ENCODE measurements at regions of chr5 and their contacts with region 1.

Region 1: GRCh38 chr5:73170522-73170921 is 2.5 kb upstream of the TMEM174 start:
- DNase-seq: peak; percentile 62
- H3K4me3 ChIP-seq: no peak overlapping the region
- H3K27ac ChIP-seq: no peak overlapping the region
- H3K4me1 ChIP-seq: no peaks in the 10 kb centered on the region
- H3K27me3 ChIP-seq: peaks cover 21 to 41% of the 10 kb centered on the region in 2 experiments
- CTCF ChIP-seq: peak; percentile 75 to 79
- POLR2A ChIP-seq: no peak

Region 2: GRCh38 chr5:73007051-73007450 is 163.5 kb before region 1 on chr5:
- CTCF ChIA-PET with region 1: no interaction called
- POLR2A ChIA-PET with region 1: no interaction called
- dilution Hi-C with region 1: no loop called
- intact Hi-C with region 1: no loop called
- DNase-seq: no peak
- H3K4me3 ChIP-seq: no peak overlapping the region
- H3K27ac ChIP-seq: no peak overlapping the region
- H3K4me1 ChIP-seq: no peaks in the 10 kb centered on the region
- H3K27me3 ChIP-seq: no peaks in the 10 kb centered on the region
- CTCF ChIP-seq: no peak
- POLR2A ChIP-seq: no peak

Region 3: GRCh38 chr5:73039086-73039485 is 131.4 kb before region 1 on chr5:
- CTCF ChIA-PET with region 1: no interaction called
- POLR2A ChIA-PET with region 1: no interaction called
- dilution Hi-C with region 1: no loop called
- intact Hi-C with region 1: no loop called
- DNase-seq: no peak
- H3K4me3 ChIP-seq: no peak overlapping the region
- H3K27ac ChIP-seq: no peak overlapping the region
- H3K4me1 ChIP-seq: no peaks in the 10 kb centered on the region
- H3K27me3 ChIP-seq: no peaks in the 10 kb centered on the region
- CTCF ChIP-seq: no peak
- POLR2A ChIP-seq: no peak

Region 4: GRCh38 chr5:73081093-73081492 is 89.4 kb before region 1 on chr5:
- CTCF ChIA-PET with region 1: interaction called, 57 read pairs
- POLR2A ChIA-PET with region 1: no interaction called
- dilution Hi-C with region 1: no loop called
- intact Hi-C with region 1: loop called (anchors 1 kb)
- DNase-seq: no peak
- H3K4me3 ChIP-seq: no peak overlapping the region
- H3K27ac ChIP-seq: no peak overlapping the region
- H3K4me1 ChIP-seq: no peaks in the 10 kb centered on the region
- H3K27me3 ChIP-seq: no peaks in the 10 kb centered on the region
- CTCF ChIP-seq: no peak
- POLR2A ChIP-seq: no peak

Region 5: DNA sequence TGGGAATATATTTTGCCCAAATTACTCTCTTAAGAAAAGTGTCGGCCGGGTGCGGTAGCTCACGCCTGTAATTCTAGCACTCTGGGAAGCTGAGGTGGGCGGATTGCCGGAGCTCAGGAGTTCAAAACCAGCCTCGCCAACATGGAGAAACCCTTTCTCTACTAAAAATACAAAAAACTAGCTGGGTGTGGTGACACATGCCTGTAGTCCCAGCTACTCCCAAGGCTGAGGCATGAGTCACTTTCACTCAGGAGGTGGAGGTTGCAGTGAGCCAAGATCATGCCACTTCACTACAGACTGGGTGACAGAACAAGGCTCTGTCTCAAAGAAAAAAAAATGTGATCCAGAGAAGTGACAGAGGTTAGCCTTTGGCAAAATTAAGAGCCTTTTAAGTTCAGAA is 76.6 kb before region 1 on chr5:
- CTCF ChIA-PET with region 1: interaction called, 13 read pairs
- POLR2A ChIA-PET with region 1: interaction called, 4 read pairs
- dilution Hi-C with region 1: no loop called
- intact Hi-C with region 1: no loop called
- DNase-seq: peak; percentile 8
- H3K4me3 ChIP-seq: no peak overlapping the region
- H3K27ac ChIP-seq: no peak overlapping the region
- H3K4me1 ChIP-seq: no peaks in the 10 kb centered on the region
- H3K27me3 ChIP-seq: no peaks in the 10 kb centered on the region
- CTCF ChIP-seq: no peak
- POLR2A ChIP-seq: no peak

Region 6: GRCh38 chr5:73135429-73136054 is 35.0 kb before region 1 on chr5:
- CTCF ChIA-PET with region 1: interaction called, 28 read pairs
- POLR2A ChIA-PET with region 1: no interaction called
- dilution Hi-C with region 1: no loop called
- intact Hi-C with region 1: loop called (anchors 1 kb)
- DNase-seq: peak; percentile 16
- H3K4me3 ChIP-seq: no peak overlapping the region
- H3K27ac ChIP-seq: no peak overlapping the region
- H3K4me1 ChIP-seq: no peaks in the 10 kb centered on the region
- H3K27me3 ChIP-seq: peaks cover 0 to 1% of the 10 kb centered on the region in 2 experiments
- CTCF ChIP-seq: peak; percentile 27 to 33
- POLR2A ChIP-seq: no peak

Region 7: GRCh38 chr5:73180566-73180965 is 10.0 kb after region 1 on chr5:
- CTCF ChIA-PET with region 1: interaction called, 14 read pairs
- POLR2A ChIA-PET with region 1: no interaction called
- dilution Hi-C with region 1: no loop called
- intact Hi-C with region 1: no loop called
- DNase-seq: no peak
- H3K4me3 ChIP-seq: no peak overlapping the region
- H3K27ac ChIP-seq: no peak overlapping the region
- H3K4me1 ChIP-seq: no peaks in the 10 kb centered on the region
- H3K27me3 ChIP-seq: peaks cover 31 to 73% of the 10 kb centered on the region in 2 experiments
- CTCF ChIP-seq: no peak
- POLR2A ChIP-seq: no peak

Measured in endothelial cell of umbilical vein (primary cell).